HEK293 (cell line): ENCODE measurements at regions of chr1 and their contacts with region 1.

Region 1: DNA sequence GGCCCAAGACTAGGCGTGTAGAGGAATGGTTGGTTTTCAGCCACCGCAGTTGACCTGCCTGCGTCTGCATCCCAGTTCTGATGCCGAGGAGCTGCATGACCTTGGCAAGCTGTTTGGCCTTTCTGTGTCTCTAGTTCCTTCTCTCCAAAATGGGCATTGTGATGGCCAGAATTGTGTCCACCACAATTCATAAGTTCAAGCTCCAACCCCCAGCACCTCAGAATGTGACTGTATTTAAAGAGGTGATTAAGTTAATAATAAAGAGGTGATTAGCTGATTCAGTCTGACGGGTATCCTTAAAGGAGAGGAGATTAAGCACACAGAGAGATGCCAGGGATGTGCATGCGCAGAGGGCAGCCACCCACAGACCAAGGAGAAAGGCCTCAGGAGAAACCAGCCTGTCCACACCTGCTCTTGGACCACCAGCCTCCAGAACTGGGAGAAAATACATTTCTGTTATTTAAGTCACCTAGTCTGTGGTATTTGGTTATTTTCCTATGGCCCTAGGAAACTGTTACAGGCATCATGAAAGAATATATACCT is 28.5 kb downstream of the MAB21L3 start:
- H3K4me3 ChIP-seq: no peak overlapping the region
- H3K27ac ChIP-seq: no peak overlapping the region
- H3K4me1 ChIP-seq: no peaks in the 10 kb centered on the region
- CTCF ChIP-seq: no peak

Region 2: DNA sequence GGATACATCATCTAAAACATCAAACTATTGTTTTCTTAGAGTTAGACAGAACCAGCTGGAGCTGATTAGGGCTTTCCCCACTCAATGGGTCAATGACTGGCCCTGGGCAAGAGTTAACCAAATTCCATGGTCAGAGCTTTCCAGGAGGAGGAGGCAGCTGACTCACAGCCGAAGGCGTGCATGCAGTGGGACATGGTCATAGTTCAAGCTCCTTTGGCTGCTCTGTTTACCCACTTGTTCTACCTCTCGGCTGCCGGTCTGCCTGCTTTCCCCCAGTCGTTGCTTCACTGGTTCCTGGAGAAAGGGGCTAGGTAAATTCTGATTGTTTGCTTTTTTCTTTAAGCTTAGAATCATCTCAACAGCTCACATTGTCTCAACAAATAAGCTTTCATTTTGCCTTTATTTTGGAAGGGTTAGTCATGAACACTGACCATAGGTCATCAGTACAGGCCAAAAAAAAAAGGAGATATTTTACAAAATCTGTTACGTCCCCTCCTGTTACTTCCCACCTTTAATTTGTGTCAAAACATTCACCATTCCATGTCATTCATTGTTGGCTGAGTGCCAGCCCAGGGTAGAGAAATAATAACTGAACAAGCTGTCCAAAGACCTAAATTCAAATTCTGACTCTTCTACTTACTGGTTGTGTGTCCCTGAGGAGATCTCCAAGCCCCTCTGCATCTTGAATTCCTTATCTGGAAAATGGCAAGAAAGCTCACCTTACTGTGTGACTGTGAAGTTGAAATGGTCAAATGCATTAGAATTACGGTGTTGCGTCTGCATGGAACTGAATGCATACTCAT is 16.5 kb before region 1 on chr1:
- CTCF ChIA-PET with region 1: interaction called, 13 read pairs
- POLR2A ChIA-PET with region 1: no interaction called
- H3K4me3 ChIP-seq: no peak overlapping the region
- H3K27ac ChIP-seq: no peak overlapping the region
- H3K4me1 ChIP-seq: no peaks in the 10 kb centered on the region
- CTCF ChIP-seq: no peak

Region 3: GRCh38 chr1:116370181-116370580 is 230.5 kb after region 1 on chr1:
- CTCF ChIA-PET with region 1: interaction called, 10 read pairs
- POLR2A ChIA-PET with region 1: no interaction called
- H3K4me3 ChIP-seq: no peak overlapping the region
- H3K27ac ChIP-seq: no peak overlapping the region
- H3K4me1 ChIP-seq: no peaks in the 10 kb centered on the region
- CTCF ChIP-seq: no peak

Region 4: DNA sequence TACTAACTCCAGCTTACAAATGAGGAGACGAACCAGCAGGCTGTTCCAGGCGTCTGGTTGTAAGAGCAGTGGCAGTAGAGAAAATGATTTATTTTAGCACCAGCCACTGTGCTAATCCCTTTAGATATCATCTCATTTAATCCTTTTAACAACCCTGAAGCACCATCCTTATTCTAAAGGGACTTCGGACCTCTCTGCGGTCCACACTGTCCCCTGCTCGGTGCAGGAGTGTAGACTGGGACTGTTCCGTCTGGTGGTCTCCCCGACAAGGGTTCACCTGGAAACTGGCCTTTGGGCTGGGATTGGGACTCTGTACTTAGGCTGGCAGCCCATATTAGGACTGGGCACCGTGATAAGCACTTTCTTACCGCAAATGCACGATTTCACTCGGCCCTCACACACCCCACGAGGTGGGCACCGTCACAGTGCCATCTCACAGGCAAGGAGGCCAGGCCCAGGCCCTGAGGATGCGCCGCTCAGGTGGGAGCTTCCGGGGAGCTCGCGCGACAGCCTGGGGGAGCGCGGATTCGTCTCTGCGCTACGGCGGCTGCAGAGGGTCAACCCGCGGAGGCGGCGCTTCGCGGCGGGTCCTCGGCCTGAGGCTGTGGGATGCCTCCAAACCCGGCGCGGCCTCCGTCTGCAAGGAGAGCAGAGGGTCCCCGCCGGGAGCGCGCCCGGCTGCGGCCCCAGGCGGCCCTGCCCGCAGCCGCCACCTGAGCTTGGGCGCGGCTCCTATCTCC is 278.6 kb after region 1 on chr1:
- CTCF ChIA-PET with region 1: interaction called, 13 read pairs
- POLR2A ChIA-PET with region 1: interaction called, 4 read pairs
- H3K4me3 ChIP-seq: peak overlapping the region; percentile 51
- H3K27ac ChIP-seq: peak overlapping the region; percentile 54; the same call in 1 of the 2 replicates
- H3K4me1 ChIP-seq: no peaks in the 10 kb centered on the region; the same call in 1 of the 2 replicates
- CTCF ChIP-seq: 0 out of 2 replicates have a peak, but pooled peaks have one; percentile 20

Region 5: GRCh38 chr1:116492358-116492811 is 352.7 kb after region 1 on chr1:
- CTCF ChIA-PET with region 1: interaction called, 331 read pairs
- POLR2A ChIA-PET with region 1: no interaction called
- H3K4me3 ChIP-seq: no peak overlapping the region
- H3K27ac ChIP-seq: no peak overlapping the region
- H3K4me1 ChIP-seq: no peaks in the 10 kb centered on the region
- CTCF ChIP-seq: no peak

Region 6: DNA sequence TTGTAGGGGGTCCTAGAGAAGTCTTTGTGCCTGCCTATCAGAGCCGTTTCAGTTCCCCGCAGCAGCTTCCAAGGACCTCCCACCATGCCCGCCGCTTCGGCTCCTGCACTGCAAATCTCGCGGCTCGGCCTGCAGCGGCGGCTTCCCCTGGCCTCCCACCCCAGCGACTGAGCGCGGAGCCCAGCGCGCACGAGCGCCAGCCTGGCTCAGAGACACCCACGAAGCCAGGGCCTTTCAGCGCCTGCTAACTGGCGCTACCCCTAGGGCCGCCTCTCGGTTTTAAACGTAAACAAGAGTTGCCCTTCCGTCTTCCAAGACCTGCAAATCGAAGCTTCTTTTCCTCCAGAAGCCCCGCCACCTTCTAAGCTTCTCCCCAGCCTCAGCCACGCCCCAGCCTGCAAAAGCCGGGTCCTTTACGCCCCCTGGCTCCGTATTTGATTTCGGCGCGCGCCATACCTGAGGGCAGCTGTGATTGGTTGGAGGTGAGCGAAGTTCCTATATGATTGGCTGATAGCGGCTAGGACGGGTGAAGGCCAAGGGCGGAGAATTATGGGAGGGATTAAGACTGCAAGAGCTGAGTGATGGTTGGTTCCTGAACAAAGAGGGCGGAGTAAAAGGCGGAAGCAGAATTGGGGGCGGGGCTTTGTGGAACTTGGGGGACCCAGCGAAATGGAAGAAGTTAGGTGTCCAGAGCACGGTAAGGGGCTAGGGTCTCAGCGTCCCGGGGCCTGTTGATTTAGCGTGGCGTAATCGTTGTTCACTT is 920.2 kb after region 1 on chr1 and contains the start of gene TTF2:
- CTCF ChIA-PET with region 1: interaction called, 11 read pairs
- POLR2A ChIA-PET with region 1: no interaction called
- H3K4me3 ChIP-seq: peak within 1 kb of the TSS; percentile 90
- H3K27ac ChIP-seq: peak within 1 kb of the TSS; percentile 86
- H3K4me1 ChIP-seq: no peaks in the 10 kb centered on the region
- CTCF ChIP-seq: peak; percentile 71